T-cell (primary cell): ENCODE measurements at regions of chr11 and their contacts with region 1.

Region 1: GRCh38 chr11:31958076-31958735 is 132.7 kb upstream of the RCN1 start:
- DNase-seq: peak in 33 of 35 experiments; percentile 2 to 63 (median 28)
- ATAC-seq: no peak
- H3K4me3 ChIP-seq: no peak overlapping the region
- H3K4me3 Mint-ChIP-seq: no peak overlapping the region
- H3K27ac ChIP-seq: no peak overlapping the region
- H3K27ac Mint-ChIP-seq: no peak overlapping the region
- H3K4me1 ChIP-seq: no peaks in the 10 kb centered on the region
- H3K4me1 Mint-ChIP-seq: peaks cover 0 to 4% (median 0%) of the 10 kb centered on the region in 3 donors
- H3K27me3 ChIP-seq: peaks cover 0 to 3% of the 10 kb centered on the region in 2 experiments
- H3K27me3 Mint-ChIP-seq: no peaks in the 10 kb centered on the region

Region 2: GRCh38 chr11:31240338-31240904 is 717.8 kb before region 1 on chr11:
- CTCF ChIA-PET with region 1: interaction called, 4 to 19 read pairs
- POLR2A ChIA-PET with region 1: no interaction called
- DNase-seq: peak in 9 of 35 experiments; percentile 0 to 52 (median 6)
- ATAC-seq: no peak
- H3K4me3 ChIP-seq: no peak overlapping the region
- H3K4me3 Mint-ChIP-seq: no peak overlapping the region
- H3K27ac ChIP-seq: no peak overlapping the region
- H3K27ac Mint-ChIP-seq: no peak overlapping the region
- H3K4me1 ChIP-seq: no peaks in the 10 kb centered on the region
- H3K4me1 Mint-ChIP-seq: no peaks in the 10 kb centered on the region
- H3K27me3 ChIP-seq: no peaks in the 10 kb centered on the region
- H3K27me3 Mint-ChIP-seq: peaks cover 0 to 4% of the 10 kb centered on the region in 2 donors

Region 3: DNA sequence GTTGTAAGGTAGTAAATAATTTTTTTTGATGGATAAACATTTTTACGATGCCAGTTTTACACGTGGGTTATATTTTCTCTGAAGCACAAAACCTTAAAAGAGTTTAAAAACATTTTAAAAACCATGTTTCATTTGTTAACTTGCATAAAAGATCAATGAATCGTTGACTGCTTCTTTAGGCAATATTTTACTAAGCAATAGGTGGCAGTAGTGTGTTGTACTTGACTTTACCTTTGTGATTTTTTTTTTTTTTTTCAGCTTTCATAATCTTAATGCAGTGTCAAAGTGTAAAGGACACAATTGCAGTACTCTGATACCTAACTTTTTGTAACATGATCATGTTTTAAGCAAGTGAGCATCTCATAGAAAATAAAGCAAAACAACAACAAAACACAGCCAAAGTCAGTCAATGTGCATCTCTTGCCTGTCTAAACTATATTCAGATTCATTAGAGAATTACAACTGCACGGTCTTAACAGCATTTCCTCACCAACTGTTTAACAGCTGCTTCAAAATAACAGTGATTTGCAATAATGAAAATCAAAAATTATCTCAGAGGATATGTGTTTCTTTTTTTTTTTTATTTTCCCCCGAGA is 560.9 kb before region 1 on chr11:
- CTCF ChIA-PET with region 1: interaction called in 1 of 2 experiments, 10 read pairs
- POLR2A ChIA-PET with region 1: no interaction called
- DNase-seq: peak in 1 of 35 experiments; percentile 42
- ATAC-seq: no peak
- H3K4me3 ChIP-seq: no peak overlapping the region
- H3K4me3 Mint-ChIP-seq: no peak overlapping the region
- H3K27ac ChIP-seq: no peak overlapping the region
- H3K27ac Mint-ChIP-seq: no peak overlapping the region
- H3K4me1 ChIP-seq: no peaks in the 10 kb centered on the region
- H3K4me1 Mint-ChIP-seq: peaks cover 0 to 2% (median 0%) of the 10 kb centered on the region in 3 donors
- H3K27me3 ChIP-seq: no peaks in the 10 kb centered on the region
- H3K27me3 Mint-ChIP-seq: no peaks in the 10 kb centered on the region

Region 4: DNA sequence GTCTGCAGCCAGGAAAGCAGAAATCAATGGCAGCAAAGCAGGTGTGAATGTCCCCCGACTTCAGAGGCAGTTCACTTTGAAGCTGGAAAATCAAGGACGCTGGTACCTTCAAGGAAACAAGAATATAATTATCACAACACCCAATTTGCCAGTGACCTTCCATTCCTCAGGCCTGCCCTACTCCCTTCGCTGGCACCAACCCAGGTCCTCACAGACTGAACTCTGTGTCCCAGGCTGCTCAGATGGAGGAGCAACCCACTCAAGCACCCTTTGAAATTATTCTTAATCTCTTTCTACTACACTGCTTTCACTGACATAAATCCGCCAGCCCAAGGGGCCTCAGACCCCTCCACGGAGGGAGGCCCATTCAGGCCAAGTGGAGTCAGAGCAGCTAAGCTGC is 541.8 kb after region 1 on chr11:
- CTCF ChIA-PET with region 1: no interaction called
- POLR2A ChIA-PET with region 1: no interaction called
- DNase-seq: no peak
- ATAC-seq: no peak
- H3K4me3 ChIP-seq: no peak overlapping the region
- H3K4me3 Mint-ChIP-seq: no peak overlapping the region
- H3K27ac ChIP-seq: no peak overlapping the region
- H3K27ac Mint-ChIP-seq: no peak overlapping the region
- H3K4me1 ChIP-seq: no peaks in the 10 kb centered on the region
- H3K4me1 Mint-ChIP-seq: no peaks in the 10 kb centered on the region
- H3K27me3 ChIP-seq: peaks cover 0 to 6% of the 10 kb centered on the region in 2 experiments
- H3K27me3 Mint-ChIP-seq: peaks cover 2 to 4% of the 10 kb centered on the region in 2 donors